Caco-2 (cell line): ENCODE measurements at regions of chr5 and their contacts with region 1.

Region 1: GRCh38 chr5:149618581-149619251 is 37.4 kb downstream of the ARHGEF37 start:
- DNase-seq: peak; percentile 76 to 79
- H3K4me3 ChIP-seq: no peak overlapping the region
- H3K4me3 Mint-ChIP-seq: no peak overlapping the region
- H3K27ac Mint-ChIP-seq: peak overlapping the region; percentile 69
- H3K4me1 ChIP-seq: peaks cover 8% of the 10 kb centered on the region
- H3K4me1 Mint-ChIP-seq: peaks cover 7% of the 10 kb centered on the region
- H3K27me3 ChIP-seq: no peaks in the 10 kb centered on the region
- H3K27me3 Mint-ChIP-seq: no peaks in the 10 kb centered on the region
- CTCF ChIP-seq: peak; percentile 69 to 71

Region 2: GRCh38 chr5:149442563-149443182 is 176.0 kb before region 1 on chr5:
- CTCF ChIA-PET with region 1: interaction called, 3 read pairs
- POLR2A ChIA-PET with region 1: no interaction called
- intact Hi-C with region 1: loop called (anchors 2 kb)
- DNase-seq: peak; percentile 81 to 92
- H3K4me3 ChIP-seq: no peak overlapping the region
- H3K4me3 Mint-ChIP-seq: no peak overlapping the region
- H3K27ac Mint-ChIP-seq: peak overlapping the region; percentile 47
- H3K4me1 ChIP-seq: peaks cover 23% of the 10 kb centered on the region
- H3K4me1 Mint-ChIP-seq: peaks cover 30% of the 10 kb centered on the region
- H3K27me3 ChIP-seq: no peaks in the 10 kb centered on the region
- H3K27me3 Mint-ChIP-seq: no peaks in the 10 kb centered on the region
- CTCF ChIP-seq: peak; percentile 85 to 95

Region 3: GRCh38 chr5:149561848-149562247 is 56.9 kb before region 1 on chr5:
- CTCF ChIA-PET with region 1: interaction called, 6 read pairs
- POLR2A ChIA-PET with region 1: no interaction called
- intact Hi-C with region 1: loop called (anchors 1 kb)
- DNase-seq: no peak
- H3K4me3 ChIP-seq: no peak overlapping the region
- H3K4me3 Mint-ChIP-seq: no peak overlapping the region
- H3K27ac Mint-ChIP-seq: peak overlapping the region; percentile 26
- H3K4me1 ChIP-seq: peaks cover 33% of the 10 kb centered on the region
- H3K4me1 Mint-ChIP-seq: peaks cover 18% of the 10 kb centered on the region
- H3K27me3 ChIP-seq: no peaks in the 10 kb centered on the region
- H3K27me3 Mint-ChIP-seq: no peaks in the 10 kb centered on the region
- CTCF ChIP-seq: no peak

Region 4: GRCh38 chr5:149586791-149587283 is 31.9 kb before region 1 on chr5:
- CTCF ChIA-PET with region 1: interaction called, 5 read pairs
- POLR2A ChIA-PET with region 1: no interaction called
- intact Hi-C with region 1: loop called (anchors 1 kb)
- DNase-seq: peak in 1 of 2 experiments; percentile 45
- H3K4me3 ChIP-seq: no peak overlapping the region
- H3K4me3 Mint-ChIP-seq: no peak overlapping the region
- H3K27ac Mint-ChIP-seq: peak overlapping the region; percentile 4
- H3K4me1 ChIP-seq: peaks cover 11% of the 10 kb centered on the region
- H3K4me1 Mint-ChIP-seq: peaks cover 10% of the 10 kb centered on the region
- H3K27me3 ChIP-seq: no peaks in the 10 kb centered on the region
- H3K27me3 Mint-ChIP-seq: no peaks in the 10 kb centered on the region
- CTCF ChIP-seq: no peak

Region 5: DNA sequence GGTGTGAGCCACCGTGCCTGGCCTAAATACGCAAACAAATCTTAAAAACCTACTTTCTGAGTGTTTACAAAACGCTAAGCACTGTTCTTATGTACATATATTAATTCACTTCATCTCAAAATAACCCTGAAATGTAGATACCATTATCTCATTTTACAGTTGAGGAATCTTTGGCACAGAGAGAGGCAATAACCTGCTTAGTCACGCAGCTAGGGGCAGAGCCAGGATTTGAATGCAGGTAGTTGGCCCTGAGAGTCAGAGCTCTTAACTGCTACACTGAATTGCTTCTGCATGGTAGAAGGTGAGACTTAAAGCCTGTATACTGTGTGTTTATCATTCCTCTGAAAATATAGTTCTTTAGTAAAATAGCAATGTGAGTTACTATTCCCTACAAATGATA is 15.5 kb before region 1 on chr5:
- CTCF ChIA-PET with region 1: interaction called, 21 read pairs
- POLR2A ChIA-PET with region 1: no interaction called
- intact Hi-C with region 1: loop called (anchors 1 kb)
- DNase-seq: no peak
- H3K4me3 ChIP-seq: no peak overlapping the region
- H3K4me3 Mint-ChIP-seq: peak overlapping the region; percentile 21
- H3K27ac Mint-ChIP-seq: peak overlapping the region; percentile 26
- H3K4me1 ChIP-seq: peaks cover 47% of the 10 kb centered on the region
- H3K4me1 Mint-ChIP-seq: peaks cover 37% of the 10 kb centered on the region
- H3K27me3 ChIP-seq: no peaks in the 10 kb centered on the region
- H3K27me3 Mint-ChIP-seq: no peaks in the 10 kb centered on the region
- CTCF ChIP-seq: no peak

Region 6: GRCh38 chr5:149608526-149608880 is 10.2 kb before region 1 on chr5:
- CTCF ChIA-PET with region 1: interaction called, 21 read pairs
- POLR2A ChIA-PET with region 1: no interaction called
- intact Hi-C with region 1: loop called (anchors 1 kb)
- DNase-seq: peak; percentile 59 to 70
- H3K4me3 ChIP-seq: no peak overlapping the region
- H3K4me3 Mint-ChIP-seq: no peak overlapping the region
- H3K27ac Mint-ChIP-seq: peak overlapping the region; percentile 63
- H3K4me1 ChIP-seq: peaks cover 53% of the 10 kb centered on the region
- H3K4me1 Mint-ChIP-seq: peaks cover 43% of the 10 kb centered on the region
- H3K27me3 ChIP-seq: no peaks in the 10 kb centered on the region
- H3K27me3 Mint-ChIP-seq: no peaks in the 10 kb centered on the region
- CTCF ChIP-seq: no peak

Region 7: GRCh38 chr5:150263801-150264621 is 645.3 kb after region 1 on chr5:
- CTCF ChIA-PET with region 1: no interaction called
- POLR2A ChIA-PET with region 1: no interaction called
- intact Hi-C with region 1: no loop called
- DNase-seq: no peak
- H3K4me3 ChIP-seq: no peak overlapping the region
- H3K4me3 Mint-ChIP-seq: no peak overlapping the region
- H3K27ac Mint-ChIP-seq: no peak overlapping the region
- H3K4me1 ChIP-seq: no peaks in the 10 kb centered on the region
- H3K4me1 Mint-ChIP-seq: no peaks in the 10 kb centered on the region
- H3K27me3 ChIP-seq: no peaks in the 10 kb centered on the region
- H3K27me3 Mint-ChIP-seq: no peaks in the 10 kb centered on the region
- CTCF ChIP-seq: no peak